GM12878 (cell line): ENCODE measurements at regions of chr6 and their contacts with region 1.

Region 1: GRCh38 chr6:76275746-76276145 is 203.3 kb upstream of the IMPG1 start:
- DNase-seq: no peak
- ATAC-seq: peak; percentile 77
- H3K4me3 ChIP-seq: no peak overlapping the region
- H3K27ac ChIP-seq: no peak overlapping the region
- H3K4me1 ChIP-seq: no peaks in the 10 kb centered on the region
- H3K27me3 ChIP-seq: no peaks in the 10 kb centered on the region
- CTCF ChIP-seq: peak in 2 of 3 experiments; percentile 25 to 31; a peak in 2 of 6 replicates
- EP300 ChIP-seq: no peak
- POLR2A ChIP-seq: no peak
- RAD21 ChIP-seq: peak; percentile 28

Region 2: GRCh38 chr6:76351275-76351674 is 75.5 kb after region 1 on chr6:
- CTCF ChIA-PET with region 1: no interaction called
- POLR2A ChIA-PET with region 1: no interaction called
- RAD21 ChIA-PET with region 1: interaction called, 12 read pairs
- SMC1A ChIA-PET with region 1: interaction called, 3 read pairs
- in situ Hi-C with region 1: no loop called
- intact Hi-C with region 1: no loop called
- DNase-seq: no peak
- ATAC-seq: peak; percentile 54
- H3K4me3 ChIP-seq: no peak overlapping the region
- H3K27ac ChIP-seq: no peak overlapping the region
- H3K4me1 ChIP-seq: no peaks in the 10 kb centered on the region
- H3K27me3 ChIP-seq: no peaks in the 10 kb centered on the region
- CTCF ChIP-seq: peak; percentile 11 to 33 (median 31); a peak in 2 of 6 replicates
- EP300 ChIP-seq: no peak
- POLR2A ChIP-seq: no peak
- RAD21 ChIP-seq: peak; percentile 35; the same call in 1 of the 2 replicates